Gastrocnemius medialis (tissue), 4 donors: ENCODE measurements at regions of chr7 and their contacts with region 1.

Region 1: DNA sequence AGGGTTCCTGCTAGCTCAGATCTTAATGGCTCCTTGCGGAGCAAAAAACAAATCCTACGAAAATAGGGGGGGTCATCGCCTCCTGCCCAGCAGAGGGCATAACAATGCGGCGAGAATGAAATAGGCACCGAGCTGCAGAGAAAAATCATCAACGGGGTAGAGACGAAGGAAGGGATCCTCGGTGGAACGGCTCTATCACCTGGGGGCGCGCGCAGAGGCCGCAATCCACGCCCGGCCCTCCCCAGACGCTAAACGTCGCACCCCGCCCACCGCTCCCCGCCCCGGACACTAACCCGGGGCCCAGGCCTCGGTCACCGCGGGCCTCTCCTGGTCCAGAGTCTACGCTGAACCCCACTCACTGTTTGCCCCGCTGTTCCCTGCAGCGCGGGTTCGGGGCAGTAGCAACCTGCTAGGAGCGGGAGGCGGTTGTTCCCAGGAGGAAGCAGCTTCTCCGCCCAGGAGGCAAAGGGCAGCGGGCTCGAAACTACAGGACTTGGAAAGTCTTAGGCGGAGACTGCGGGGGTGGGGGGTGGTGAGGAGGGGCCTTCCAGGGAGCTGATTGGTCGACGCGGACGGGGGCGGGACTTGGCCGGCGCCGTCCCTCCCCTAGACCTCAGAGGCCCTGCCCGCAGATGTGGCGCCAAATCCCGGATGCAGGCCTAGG is at the start of gene TCAF1:
- DNase-seq: peak; percentile 94
- ATAC-seq: peak; percentile 96 to 97
- H3K4me3 ChIP-seq: peak within 1 kb of the TSS; percentile 80 to 99 (median 94)
- H3K27ac ChIP-seq: peak within 1 kb of the TSS; percentile 86 to 97 (median 94)
- H3K4me1 ChIP-seq: peaks cover 21 to 32% of the 10 kb centered on the region in 2 donors
- H3K27me3 ChIP-seq: no peaks in the 10 kb centered on the region
- CTCF ChIP-seq: peak in 3 of 5 experiments; percentile 20 to 23 (median 21)
- POLR2A ChIP-seq: peak; percentile 65 to 71
- total RNA-seq, gene TCAF1: 31.4 to 43.0 (median 32.9) TPM

Region 2: DNA sequence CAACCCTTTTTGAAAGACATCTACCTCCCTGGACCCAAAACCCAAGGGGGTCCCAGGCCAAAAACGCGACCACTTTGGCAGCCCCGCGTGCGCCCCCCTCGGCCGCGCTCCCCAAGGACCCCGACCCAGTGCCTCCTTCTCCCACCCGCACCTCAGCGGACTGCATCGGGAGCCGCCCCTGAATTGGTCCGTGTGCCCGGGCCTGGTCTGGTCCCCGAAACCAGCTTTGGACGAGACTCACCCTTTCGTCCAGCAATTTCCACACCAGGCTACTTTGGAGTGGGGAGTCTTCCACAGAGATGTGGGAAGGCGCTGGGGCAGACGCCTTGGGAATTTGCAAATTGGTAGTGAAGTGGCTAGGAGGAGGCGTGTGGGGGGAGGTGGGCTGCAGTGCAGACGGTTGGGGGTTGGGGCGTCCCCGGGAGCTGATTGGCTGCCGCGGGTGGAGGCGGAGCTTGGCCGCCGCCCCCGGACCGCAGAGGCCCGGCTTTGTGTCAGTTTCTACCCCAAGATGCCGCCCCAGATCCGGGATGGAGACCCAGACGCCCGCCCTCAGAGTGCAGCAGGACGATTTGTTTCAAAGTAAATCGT is 16.7 kb before region 1 on chr7:
- in situ Hi-C with region 1: no loop called
- intact Hi-C with region 1: loop called (anchors 2 kb)
- DNase-seq: no peak
- ATAC-seq: no peak
- H3K4me3 ChIP-seq: peak overlapping the region; percentile 37 to 52 (median 44)
- H3K27ac ChIP-seq: no peak overlapping the region
- H3K4me1 ChIP-seq: peaks cover 10 to 16% of the 10 kb centered on the region in 2 donors
- H3K27me3 ChIP-seq: peaks cover 0 to 4% (median 0%) of the 10 kb centered on the region in 3 donors
- CTCF ChIP-seq: no peak
- POLR2A ChIP-seq: no peak

Region 3: GRCh38 chr7:144050093-144050492 is 148.3 kb after region 1 on chr7:
- in situ Hi-C with region 1: no loop called
- intact Hi-C with region 1: no loop called
- DNase-seq: no peak
- ATAC-seq: no peak
- H3K4me3 ChIP-seq: no peak overlapping the region
- H3K27ac ChIP-seq: no peak overlapping the region
- H3K4me1 ChIP-seq: no peaks in the 10 kb centered on the region
- H3K27me3 ChIP-seq: no peaks in the 10 kb centered on the region
- CTCF ChIP-seq: no peak
- POLR2A ChIP-seq: no peak

Region 4: DNA sequence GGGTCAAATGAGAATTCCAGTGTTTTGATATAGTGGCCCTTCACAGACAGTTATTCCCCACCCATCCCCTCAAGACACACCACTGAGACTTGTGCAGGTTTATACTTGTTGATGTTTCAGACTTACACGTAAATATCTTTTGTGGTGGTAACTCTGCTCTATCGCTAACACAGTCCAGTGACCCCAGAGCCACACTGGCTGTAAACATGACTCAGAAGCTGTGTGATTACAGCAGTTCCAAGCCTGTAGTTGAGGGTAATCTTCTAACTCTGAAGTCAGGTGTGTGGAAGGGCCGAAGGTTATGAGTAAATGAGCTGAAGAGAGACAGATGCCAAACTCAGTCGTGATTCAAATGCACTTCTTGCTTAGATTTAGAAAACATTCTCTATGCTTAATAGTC is 482.3 kb after region 1 on chr7:
- in situ Hi-C with region 1: no loop called
- intact Hi-C with region 1: no loop called
- DNase-seq: no peak
- ATAC-seq: no peak
- H3K4me3 ChIP-seq: no peak overlapping the region
- H3K27ac ChIP-seq: no peak overlapping the region
- H3K4me1 ChIP-seq: no peaks in the 10 kb centered on the region
- H3K27me3 ChIP-seq: no peaks in the 10 kb centered on the region
- CTCF ChIP-seq: no peak
- POLR2A ChIP-seq: no peak